ENCODE measurements at regions of chr5 and their contacts with region 1.

Region 1: GRCh38 chr5:142874537-142874936 is 104.4 kb downstream of the ARHGAP26 start:
- DNase-seq: peak; percentile 99
- H3K4me3 Mint-ChIP-seq: no peak overlapping the region
- H3K27ac Mint-ChIP-seq: peak overlapping the region; percentile 32
- H3K4me1 Mint-ChIP-seq: peaks cover 73% of the 10 kb centered on the region
- H3K27me3 Mint-ChIP-seq: no peaks in the 10 kb centered on the region
- CTCF ChIP-seq: no peak

Region 2: GRCh38 chr5:142720641-142721271 is 153.8 kb before region 1 on chr5:
- CTCF ChIA-PET with region 1: interaction called, 1,942 read pairs
- POLR2A ChIA-PET with region 1: interaction called, 33 read pairs
- intact Hi-C with region 1: no loop called
- DNase-seq: peak; percentile 95
- H3K4me3 Mint-ChIP-seq: peak overlapping the region; percentile 27
- H3K27ac Mint-ChIP-seq: peak overlapping the region; percentile 74
- H3K4me1 Mint-ChIP-seq: peaks cover 46% of the 10 kb centered on the region
- H3K27me3 Mint-ChIP-seq: no peaks in the 10 kb centered on the region
- CTCF ChIP-seq: peak; percentile 24

Region 3: GRCh38 chr5:142748568-142749249 is 125.8 kb before region 1 on chr5:
- CTCF ChIA-PET with region 1: interaction called, 130 read pairs
- POLR2A ChIA-PET with region 1: interaction called, 17 read pairs
- intact Hi-C with region 1: no loop called
- DNase-seq: peak; percentile 84
- H3K4me3 Mint-ChIP-seq: no peak overlapping the region
- H3K27ac Mint-ChIP-seq: peak overlapping the region; percentile 20
- H3K4me1 Mint-ChIP-seq: peaks cover 44% of the 10 kb centered on the region
- H3K27me3 Mint-ChIP-seq: no peaks in the 10 kb centered on the region
- CTCF ChIP-seq: peak; percentile 87

Region 4: GRCh38 chr5:142821733-142822487 is 52.6 kb before region 1 on chr5:
- CTCF ChIA-PET with region 1: interaction called, 3 read pairs
- POLR2A ChIA-PET with region 1: interaction called, 5 read pairs
- intact Hi-C with region 1: loop called (anchors 5 kb)
- DNase-seq: peak; percentile 87
- H3K4me3 Mint-ChIP-seq: no peak overlapping the region
- H3K27ac Mint-ChIP-seq: no peak overlapping the region
- H3K4me1 Mint-ChIP-seq: peaks cover 41% of the 10 kb centered on the region
- H3K27me3 Mint-ChIP-seq: no peaks in the 10 kb centered on the region
- CTCF ChIP-seq: no peak

Measured in MCF 10A (cell line).